Calu3 (cell line): ENCODE measurements at regions of chr13 and their contacts with region 1.

Region 1: GRCh38 chr13:27171827-27172494 is 350 bp upstream of the USP12 start:
- DNase-seq: peak; percentile 90
- H3K4me3 Mint-ChIP-seq: peak overlapping the region; percentile 83
- H3K27ac Mint-ChIP-seq: peak overlapping the region; percentile 52
- H3K4me1 Mint-ChIP-seq: peaks cover 40% of the 10 kb centered on the region
- H3K27me3 Mint-ChIP-seq: no peaks in the 10 kb centered on the region
- CTCF ChIP-seq: no peak

Region 2: GRCh38 chr13:27053902-27054595 is 117.9 kb before region 1 on chr13:
- CTCF ChIA-PET with region 1: no interaction called
- intact Hi-C with region 1: no loop called
- DNase-seq: no peak
- H3K4me3 Mint-ChIP-seq: no peak overlapping the region
- H3K27ac Mint-ChIP-seq: no peak overlapping the region
- H3K4me1 Mint-ChIP-seq: peaks cover 16% of the 10 kb centered on the region
- H3K27me3 Mint-ChIP-seq: no peaks in the 10 kb centered on the region
- CTCF ChIP-seq: no peak

Region 3: GRCh38 chr13:27130979-27131623 is 40.9 kb before region 1 on chr13:
- CTCF ChIA-PET with region 1: no interaction called
- intact Hi-C with region 1: loop called (anchors 5 kb)
- DNase-seq: peak; percentile 46
- H3K4me3 Mint-ChIP-seq: no peak overlapping the region
- H3K27ac Mint-ChIP-seq: no peak overlapping the region
- H3K4me1 Mint-ChIP-seq: peaks cover 28% of the 10 kb centered on the region
- H3K27me3 Mint-ChIP-seq: no peaks in the 10 kb centered on the region
- CTCF ChIP-seq: no peak

Region 4: DNA sequence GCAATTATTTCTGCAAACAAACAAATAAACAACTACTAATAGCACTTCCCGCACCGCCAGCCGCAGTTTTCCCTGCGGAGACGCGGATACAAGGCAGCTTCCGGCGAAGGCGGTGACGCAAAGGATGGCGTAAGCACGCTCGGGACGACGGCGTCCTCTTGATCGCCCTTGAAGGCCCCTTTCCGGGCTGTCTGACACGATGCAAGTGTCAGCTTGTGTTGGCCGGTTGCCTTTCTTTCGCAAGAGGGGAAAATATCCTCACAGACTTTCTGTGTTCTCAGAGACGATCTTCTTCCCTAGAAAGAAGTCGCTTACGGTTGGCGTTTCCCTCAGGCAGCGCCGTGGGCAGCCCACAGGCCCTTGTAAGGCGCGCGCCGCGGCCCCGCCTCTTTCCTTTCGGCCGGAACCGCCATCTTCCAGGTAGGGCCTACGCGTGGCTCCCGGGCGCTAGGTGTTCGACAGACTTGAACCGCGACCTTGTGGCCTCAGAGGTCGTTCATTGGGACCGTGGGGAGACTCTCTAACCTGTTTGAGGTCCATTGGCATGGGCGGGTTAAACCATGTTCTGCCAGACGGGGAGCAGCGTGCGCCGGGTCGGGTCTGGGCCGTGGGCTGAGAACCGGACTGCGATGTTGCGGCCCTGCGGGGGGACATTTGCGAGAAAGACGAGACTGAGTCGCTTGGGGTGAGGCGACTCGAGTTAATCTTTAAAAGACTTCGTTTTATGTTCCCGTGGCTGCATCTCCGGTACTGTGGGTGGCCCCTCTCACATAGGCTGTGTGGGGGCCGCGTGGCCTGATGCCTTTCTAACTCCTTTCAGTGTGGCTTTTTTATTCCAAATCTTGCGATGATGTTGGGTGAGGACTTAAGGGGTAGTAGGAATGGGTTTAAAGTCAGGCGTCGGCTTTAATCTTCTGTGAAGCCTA is 79.5 kb after region 1 on chr13 and contains the start of gene RPL21:
- CTCF ChIA-PET with region 1: no interaction called
- intact Hi-C with region 1: loop called (anchors 2 kb)
- DNase-seq: peak; percentile 84
- H3K4me3 Mint-ChIP-seq: peak within 1 kb of the TSS; percentile 77
- H3K27ac Mint-ChIP-seq: peak within 1 kb of the TSS; percentile 96
- H3K4me1 Mint-ChIP-seq: peaks cover 6% of the 10 kb centered on the region
- H3K27me3 Mint-ChIP-seq: no peaks in the 10 kb centered on the region
- CTCF ChIP-seq: no peak
- total RNA-seq, gene RPL21: 379 and 434 TPM in 2 replicates

Region 5: GRCh38 chr13:27270594-27271520 is 98.9 kb after region 1 on chr13 and contains the start of gene RASL11A:
- CTCF ChIA-PET with region 1: no interaction called
- intact Hi-C with region 1: loop called (anchors 5 kb)
- DNase-seq: peak; percentile 73
- H3K4me3 Mint-ChIP-seq: peak within 1 kb of the TSS; percentile 77
- H3K27ac Mint-ChIP-seq: peak within 1 kb of the TSS; percentile 56
- H3K4me1 Mint-ChIP-seq: peaks cover 15% of the 10 kb centered on the region
- H3K27me3 Mint-ChIP-seq: peaks cover 24% of the 10 kb centered on the region
- CTCF ChIP-seq: peak; percentile 84
- total RNA-seq, gene RASL11A: 1.3 and 2.2 TPM in 2 replicates

Region 6: DNA sequence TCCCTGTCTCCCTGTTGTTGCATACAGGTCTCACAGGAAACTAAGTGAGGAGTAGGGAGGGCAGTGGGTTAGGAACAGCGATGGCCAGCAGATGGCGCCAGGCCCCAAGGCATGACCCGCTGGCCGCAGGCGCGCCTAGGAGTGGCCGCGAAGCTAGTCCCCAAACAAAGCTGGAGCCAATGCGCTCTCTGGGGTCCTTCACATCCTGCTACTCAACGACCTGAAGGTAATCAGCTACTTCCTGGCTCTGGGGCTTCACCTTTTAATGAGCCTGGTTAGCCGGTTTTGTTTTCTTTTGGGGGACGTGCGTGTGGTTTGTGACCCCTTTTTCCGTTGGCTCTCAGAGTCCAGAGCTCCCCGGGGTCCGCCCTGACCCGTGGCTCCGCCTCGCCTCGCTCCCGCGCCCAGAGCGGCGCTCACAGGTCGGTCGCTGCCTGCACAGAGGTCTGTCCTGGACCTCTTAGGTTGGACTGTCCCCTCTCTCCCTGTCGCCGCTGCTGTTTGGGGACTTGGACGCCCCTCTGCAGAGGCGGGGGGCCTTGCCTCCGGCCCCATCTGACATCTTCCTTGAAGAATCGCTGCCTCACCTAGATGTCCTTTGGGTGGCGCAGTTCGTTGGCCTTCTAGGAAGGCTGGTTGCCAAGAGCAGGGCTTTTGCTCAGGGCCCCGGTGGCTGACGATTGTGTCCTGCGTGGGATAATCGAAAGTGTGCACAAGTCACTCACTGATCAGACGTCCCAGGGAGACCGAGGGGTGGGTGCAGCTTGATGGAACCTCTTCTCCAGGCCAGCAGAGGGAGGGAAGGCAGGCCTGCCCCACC is 190.3 kb after region 1 on chr13:
- CTCF ChIA-PET with region 1: no interaction called
- intact Hi-C with region 1: no loop called
- DNase-seq: peak; percentile 82
- H3K4me3 Mint-ChIP-seq: peak overlapping the region; percentile 41
- H3K27ac Mint-ChIP-seq: no peak overlapping the region
- H3K4me1 Mint-ChIP-seq: no peaks in the 10 kb centered on the region
- H3K27me3 Mint-ChIP-seq: peaks cover 27% of the 10 kb centered on the region
- CTCF ChIP-seq: peak; percentile 80

Region 7: GRCh38 chr13:27583614-27584031 is 411.7 kb after region 1 on chr13:
- CTCF ChIA-PET with region 1: no interaction called
- intact Hi-C with region 1: no loop called
- DNase-seq: no peak
- H3K4me3 Mint-ChIP-seq: no peak overlapping the region
- H3K27ac Mint-ChIP-seq: no peak overlapping the region
- H3K4me1 Mint-ChIP-seq: no peaks in the 10 kb centered on the region
- H3K27me3 Mint-ChIP-seq: no peaks in the 10 kb centered on the region
- CTCF ChIP-seq: no peak